ENCODE measurements at regions of chr4 and their contacts with region 1.

Region 1: GRCh38 chr4:20916106-20916505 is 215.8 kb downstream of the PACRGL start:
- DNase-seq: peak; percentile 1
- H3K4me3 ChIP-seq: no peak overlapping the region
- H3K27ac ChIP-seq: no peak overlapping the region
- H3K4me1 ChIP-seq: no peaks in the 10 kb centered on the region
- H3K27me3 ChIP-seq: no peaks in the 10 kb centered on the region
- CTCF ChIP-seq: no peak

Region 2: DNA sequence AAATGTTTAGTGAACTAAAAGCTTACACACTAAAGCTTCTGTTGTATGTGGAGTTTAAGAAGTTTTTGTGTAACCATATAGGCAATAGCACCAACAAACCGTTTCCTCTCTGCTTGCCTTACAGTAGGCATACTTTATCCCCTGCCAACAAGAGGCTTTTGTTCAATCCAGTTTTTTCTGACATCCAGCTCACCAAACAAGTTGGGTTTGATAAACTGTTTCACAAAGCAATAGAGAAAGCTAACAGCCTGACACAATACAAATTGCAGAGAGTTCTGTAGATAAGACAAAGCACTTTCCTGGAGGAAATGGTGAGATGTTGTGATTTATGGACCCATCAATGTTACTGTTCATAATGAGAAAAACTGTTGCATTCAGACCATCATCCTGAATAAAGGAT is 162.1 kb before region 1 on chr4:
- CTCF ChIA-PET with region 1: no interaction called
- dilution Hi-C with region 1: no loop called
- in situ Hi-C with region 1: no loop called
- intact Hi-C with region 1: no loop called
- DNase-seq: no peak
- H3K4me3 ChIP-seq: no peak overlapping the region
- H3K27ac ChIP-seq: no peak overlapping the region
- H3K4me1 ChIP-seq: no peaks in the 10 kb centered on the region
- H3K27me3 ChIP-seq: no peaks in the 10 kb centered on the region
- CTCF ChIP-seq: no peak

Region 3: DNA sequence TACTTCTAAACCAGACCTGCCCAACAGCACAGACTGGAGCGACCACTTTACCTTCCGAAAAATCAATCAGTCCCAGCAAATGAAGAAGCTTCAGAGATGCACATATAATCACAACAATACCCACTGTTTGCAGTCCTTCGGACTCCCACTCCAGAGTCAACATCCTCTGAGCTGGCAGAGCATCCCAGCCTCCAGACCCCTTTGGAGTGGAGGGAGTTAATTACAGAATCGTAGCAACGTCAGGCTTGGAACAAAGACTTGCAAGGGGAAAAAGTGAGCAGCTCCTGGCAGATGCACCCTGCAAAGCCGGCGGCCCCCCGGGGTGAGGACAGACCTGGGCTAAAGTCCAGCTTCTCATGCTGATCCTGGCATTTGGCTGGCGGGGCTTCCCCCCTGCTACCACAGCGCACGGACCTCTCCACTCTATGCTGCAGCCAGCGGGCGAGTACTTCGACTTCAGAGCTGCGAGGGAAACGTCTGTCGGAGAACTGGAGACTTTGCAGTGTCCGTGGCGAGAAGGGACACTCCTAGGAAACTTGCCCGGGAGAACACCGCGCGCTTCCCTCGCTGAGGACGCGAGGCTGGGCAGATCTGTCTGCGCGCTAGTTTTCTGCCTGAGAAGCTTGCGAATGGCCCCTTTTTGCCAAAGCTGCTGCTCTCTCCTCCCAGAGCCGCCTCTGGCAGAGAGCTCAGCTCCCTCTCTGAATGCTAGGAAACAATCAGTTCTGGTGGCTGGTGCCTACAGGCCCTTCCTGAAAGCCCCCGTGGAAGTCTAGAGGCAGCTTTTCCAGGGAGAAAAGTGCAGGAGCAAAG is 67.9 kb after region 1 on chr4:
- CTCF ChIA-PET with region 1: no interaction called
- dilution Hi-C with region 1: loop called (anchors 5 kb)
- in situ Hi-C with region 1: no loop called
- intact Hi-C with region 1: no loop called
- DNase-seq: no peak
- H3K4me3 ChIP-seq: no peak overlapping the region
- H3K27ac ChIP-seq: no peak overlapping the region
- H3K4me1 ChIP-seq: no peaks in the 10 kb centered on the region
- H3K27me3 ChIP-seq: peaks cover 7% of the 10 kb centered on the region
- CTCF ChIP-seq: no peak

Region 4: DNA sequence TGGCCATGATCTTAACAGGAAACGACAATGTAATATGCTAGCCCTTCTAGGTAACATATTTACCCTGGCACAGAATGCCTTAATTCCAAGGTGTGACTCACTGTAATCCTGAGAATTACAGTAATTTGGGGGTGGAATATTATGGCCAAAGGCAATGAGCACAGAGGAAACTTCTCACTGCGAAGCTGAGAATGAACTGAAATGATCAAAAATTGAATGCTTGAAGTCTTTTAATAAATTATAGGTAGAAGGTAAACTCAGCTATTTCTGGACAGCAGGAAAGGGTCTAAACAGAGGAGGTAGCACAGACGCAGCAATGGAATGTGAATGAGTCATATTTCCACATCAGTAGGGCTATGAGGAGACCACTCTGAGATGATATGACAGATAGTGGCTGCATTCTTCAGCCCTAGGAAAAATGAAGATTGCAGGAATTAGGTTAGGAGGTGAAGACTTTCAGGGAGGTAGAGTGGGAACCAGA is 96.8 kb after region 1 on chr4:
- CTCF ChIA-PET with region 1: no interaction called
- dilution Hi-C with region 1: loop called (anchors 5 kb)
- in situ Hi-C with region 1: no loop called
- intact Hi-C with region 1: no loop called
- DNase-seq: peak; percentile 47
- H3K4me3 ChIP-seq: no peak overlapping the region
- H3K27ac ChIP-seq: peak overlapping the region; percentile 48
- H3K4me1 ChIP-seq: peaks cover 23% of the 10 kb centered on the region
- H3K27me3 ChIP-seq: no peaks in the 10 kb centered on the region
- CTCF ChIP-seq: no peak

Measured in mammary epithelial cell (primary cell).